Activated CD8-positive, alpha-beta memory T cell treated with anti-CD3 and anti-CD28 coated beads, Interleukin-2, amount 10 ng/mL, durations not matched to agents 7 days and 5 days (primary cell): ENCODE measurements at regions of chr1 and their contacts with region 1.

Region 1: GRCh38 chr1:6245086-6245868 is 1.3 kb downstream of the HES3 start:
- DNase-seq: peak; percentile 82
- ATAC-seq: peak; percentile 78
- H3K4me3 Mint-ChIP-seq: no peak overlapping the region
- H3K27ac Mint-ChIP-seq: no peak overlapping the region
- H3K4me1 Mint-ChIP-seq: peaks cover 19% of the 10 kb centered on the region
- H3K27me3 Mint-ChIP-seq: peaks cover 66% of the 10 kb centered on the region

Region 2: DNA sequence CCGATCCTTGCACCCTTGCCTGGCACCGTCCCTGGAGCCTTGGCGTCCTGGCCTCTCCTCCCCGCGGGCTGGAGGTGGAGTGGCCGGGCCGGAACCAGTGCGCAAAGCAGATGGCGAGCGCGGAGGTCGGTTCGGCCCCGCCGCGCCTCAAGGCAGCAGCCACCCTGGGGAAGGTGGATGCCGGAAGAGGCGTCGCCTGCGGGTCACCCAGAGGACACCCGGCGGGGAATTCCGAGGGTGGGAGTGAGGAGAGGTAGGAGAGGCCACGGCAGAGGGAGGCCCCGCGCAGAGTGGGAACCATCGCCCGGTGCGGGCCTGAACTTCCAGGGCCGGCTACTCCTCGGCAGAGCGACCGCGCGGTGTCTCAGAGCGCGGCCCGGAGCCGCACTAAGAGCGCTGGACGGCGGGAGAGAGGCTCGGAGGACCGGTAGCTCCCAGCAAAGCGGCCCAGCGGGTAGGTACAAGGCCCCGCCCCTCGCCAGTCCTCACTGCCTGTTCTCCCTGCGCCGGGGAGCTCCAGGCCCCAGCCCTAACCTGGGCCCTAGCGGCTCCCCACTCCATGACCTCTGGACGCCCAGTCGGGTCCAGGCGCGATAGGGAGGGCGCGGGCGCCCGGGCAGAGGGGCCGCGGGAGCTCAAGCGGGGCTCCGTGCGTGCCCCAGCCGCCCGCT is 39.3 kb before region 1 on chr1 and contains the start of gene RNF207:
- CTCF ChIA-PET with region 1: interaction called, 17 read pairs
- DNase-seq: peak; percentile 71
- ATAC-seq: peak; percentile 66
- H3K4me3 Mint-ChIP-seq: peak within 1 kb of the TSS; percentile 71
- H3K27ac Mint-ChIP-seq: no peak within 1 kb of the TSS
- H3K4me1 Mint-ChIP-seq: peaks cover 9% of the 10 kb centered on the region
- H3K27me3 Mint-ChIP-seq: peaks cover 13% of the 10 kb centered on the region
- total RNA-seq, gene RNF207: 12.4 to 36.7 TPM

Region 3: GRCh38 chr1:6343506-6344405 is 98.5 kb after region 1 on chr1:
- CTCF ChIA-PET with region 1: interaction called, 63 read pairs
- DNase-seq: peak; percentile 78
- ATAC-seq: peak; percentile 60
- H3K4me3 Mint-ChIP-seq: no peak overlapping the region
- H3K27ac Mint-ChIP-seq: no peak overlapping the region
- H3K4me1 Mint-ChIP-seq: peaks cover 10% of the 10 kb centered on the region
- H3K27me3 Mint-ChIP-seq: no peaks in the 10 kb centered on the region

Region 4: GRCh38 chr1:6393400-6394187 is 148.3 kb after region 1 on chr1 and contains the start of gene ACOT7:
- CTCF ChIA-PET with region 1: interaction called, 58 read pairs
- DNase-seq: peak; percentile 93
- ATAC-seq: peak; percentile 89
- H3K4me3 Mint-ChIP-seq: peak within 1 kb of the TSS; percentile 84
- H3K27ac Mint-ChIP-seq: peak within 1 kb of the TSS; percentile 92
- H3K4me1 Mint-ChIP-seq: peaks cover 35% of the 10 kb centered on the region
- H3K27me3 Mint-ChIP-seq: no peaks in the 10 kb centered on the region
- total RNA-seq, gene ACOT7: 81.3 to 87.0 TPM

Region 5: DNA sequence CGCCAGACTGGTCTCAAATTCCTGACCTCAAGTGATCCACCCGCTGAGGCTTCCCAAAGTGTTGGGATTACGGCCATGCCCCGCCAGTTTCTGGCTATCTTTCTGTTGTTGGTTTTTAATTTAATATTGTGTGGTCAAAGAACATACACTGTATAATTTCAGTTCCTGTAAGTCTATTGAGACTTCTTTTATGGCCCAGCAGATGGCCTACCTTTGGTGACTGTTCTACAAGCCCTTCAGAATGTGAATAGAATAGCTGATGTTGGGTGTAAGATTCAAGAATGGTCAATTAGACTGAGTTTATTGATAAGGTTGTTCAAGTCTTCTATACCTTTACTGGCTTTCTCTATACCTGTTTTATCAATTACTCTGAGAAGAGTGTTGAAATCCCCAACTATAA is 163.8 kb after region 1 on chr1:
- CTCF ChIA-PET with region 1: interaction called, 47 read pairs
- DNase-seq: no peak
- ATAC-seq: no peak
- H3K4me3 Mint-ChIP-seq: no peak overlapping the region
- H3K27ac Mint-ChIP-seq: no peak overlapping the region
- H3K4me1 Mint-ChIP-seq: peaks cover under 1% of the 10 kb centered on the region
- H3K27me3 Mint-ChIP-seq: peaks cover 43% of the 10 kb centered on the region

Region 6: DNA sequence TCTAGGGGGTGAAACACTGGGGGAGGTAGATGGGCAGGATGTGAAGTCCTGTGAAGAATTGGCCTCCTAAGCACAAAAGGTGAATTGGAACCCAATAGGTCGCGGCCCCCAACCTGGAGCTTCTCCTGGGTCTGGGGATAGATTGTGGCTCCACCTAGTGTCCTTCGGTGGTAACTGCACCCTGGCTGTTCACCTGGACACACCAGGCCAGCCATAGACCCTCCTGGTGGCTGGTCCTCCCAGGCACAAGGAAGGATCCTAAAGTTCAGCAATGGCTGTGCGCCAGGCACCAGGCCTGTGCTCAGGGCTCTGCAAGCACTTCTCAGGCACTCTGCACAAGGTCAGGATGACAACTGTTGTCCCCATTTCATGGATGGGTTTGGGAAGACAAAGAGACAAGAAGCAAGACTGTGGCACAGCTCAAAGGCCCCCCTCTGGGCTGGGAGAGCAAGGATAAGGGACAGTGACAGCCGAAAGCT is 192.8 kb after region 1 on chr1:
- CTCF ChIA-PET with region 1: interaction called, 68 read pairs
- DNase-seq: peak; percentile 83
- ATAC-seq: peak; percentile 62
- H3K4me3 Mint-ChIP-seq: no peak overlapping the region
- H3K27ac Mint-ChIP-seq: no peak overlapping the region
- H3K4me1 Mint-ChIP-seq: peaks cover 3% of the 10 kb centered on the region
- H3K27me3 Mint-ChIP-seq: peaks cover 34% of the 10 kb centered on the region